ENCODE measurements at regions of chr3 and their contacts with region 1.

Region 1: GRCh38 chr3:161423911-161424522 is 52.7 kb upstream of the SPTSSB start:
- DNase-seq: no peak
- ATAC-seq: peak in 3 of 4 donors; percentile 58 to 73 (median 60)
- H3K4me3 ChIP-seq: no peak overlapping the region
- H3K27ac ChIP-seq: no peak overlapping the region
- H3K4me1 ChIP-seq: no peaks in the 10 kb centered on the region
- H3K27me3 ChIP-seq: no peaks in the 10 kb centered on the region
- CTCF ChIP-seq: peak; percentile 77

Region 2: DNA sequence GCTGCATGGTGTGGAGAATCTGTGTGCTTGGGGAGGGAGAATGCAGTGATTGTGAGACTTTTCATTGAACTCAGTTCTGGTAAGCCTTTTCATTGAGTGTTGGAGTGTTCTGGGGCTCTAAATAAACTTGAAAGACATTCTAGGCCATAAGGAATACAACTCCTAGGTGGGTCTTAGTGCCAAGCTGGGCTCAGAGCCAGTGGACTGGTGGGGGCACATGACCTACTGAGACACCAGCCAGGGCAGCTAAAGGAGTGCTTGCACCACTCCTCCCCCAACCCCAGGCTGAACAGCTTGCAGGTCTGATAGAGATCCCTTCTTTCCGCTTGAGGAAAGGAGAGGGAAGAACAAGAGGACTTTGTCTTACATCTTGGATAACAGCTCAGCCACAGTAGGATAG is 836.9 kb before region 1 on chr3:
- intact Hi-C with region 1: loop called in 1 of 2 experiments (anchors 10 kb)
- DNase-seq: peak; percentile 21 to 86
- ATAC-seq: peak; percentile 77 to 99 (median 96)
- H3K4me3 ChIP-seq: no peak overlapping the region
- H3K27ac ChIP-seq: peak overlapping the region; percentile 33
- H3K4me1 ChIP-seq: peaks cover 11% of the 10 kb centered on the region
- H3K27me3 ChIP-seq: no peaks in the 10 kb centered on the region
- CTCF ChIP-seq: no peak

Region 3: GRCh38 chr3:160707187-160707794 is 716.7 kb before region 1 on chr3:
- intact Hi-C with region 1: loop called in 1 of 2 experiments (anchors 5 kb)
- DNase-seq: no peak
- ATAC-seq: peak; percentile 76 to 98 (median 84)
- H3K4me3 ChIP-seq: no peak overlapping the region
- H3K27ac ChIP-seq: no peak overlapping the region
- H3K4me1 ChIP-seq: no peaks in the 10 kb centered on the region
- H3K27me3 ChIP-seq: no peaks in the 10 kb centered on the region
- CTCF ChIP-seq: peak; percentile 75

Region 4: GRCh38 chr3:161274719-161275298 is 149.2 kb before region 1 on chr3:
- intact Hi-C with region 1: loop called (anchors 2 to 5 kb)
- DNase-seq: no peak
- ATAC-seq: no peak
- H3K4me3 ChIP-seq: no peak overlapping the region
- H3K27ac ChIP-seq: no peak overlapping the region
- H3K4me1 ChIP-seq: no peaks in the 10 kb centered on the region
- H3K27me3 ChIP-seq: no peaks in the 10 kb centered on the region
- CTCF ChIP-seq: peak; percentile 50

Region 5: GRCh38 chr3:161672478-161672877 is 248.5 kb after region 1 on chr3:
- intact Hi-C with region 1: no loop called
- DNase-seq: peak; percentile 15 to 35
- ATAC-seq: peak in 2 of 4 donors; percentile 35 to 99
- H3K4me3 ChIP-seq: no peak overlapping the region
- H3K27ac ChIP-seq: no peak overlapping the region
- H3K4me1 ChIP-seq: no peaks in the 10 kb centered on the region
- H3K27me3 ChIP-seq: no peaks in the 10 kb centered on the region
- CTCF ChIP-seq: no peak